ENCODE measurements at regions of chr14 and their contacts with region 1.

Region 1: GRCh38 chr14:75126679-75127473 is at the start of gene NEK9:
- DNase-seq: peak; percentile 92 to 96
- ATAC-seq: peak; percentile 93 to 96 (median 95)
- H3K4me3 ChIP-seq: peak within 1 kb of the TSS; percentile 83
- H3K27ac ChIP-seq: peak within 1 kb of the TSS; percentile 93
- H3K4me1 ChIP-seq: peaks cover 41% of the 10 kb centered on the region
- H3K27me3 ChIP-seq: no peaks in the 10 kb centered on the region
- CTCF ChIP-seq: no peak
- total RNA-seq, gene NEK9: 69.1 to 116 (median 88.5) TPM

Region 2: DNA sequence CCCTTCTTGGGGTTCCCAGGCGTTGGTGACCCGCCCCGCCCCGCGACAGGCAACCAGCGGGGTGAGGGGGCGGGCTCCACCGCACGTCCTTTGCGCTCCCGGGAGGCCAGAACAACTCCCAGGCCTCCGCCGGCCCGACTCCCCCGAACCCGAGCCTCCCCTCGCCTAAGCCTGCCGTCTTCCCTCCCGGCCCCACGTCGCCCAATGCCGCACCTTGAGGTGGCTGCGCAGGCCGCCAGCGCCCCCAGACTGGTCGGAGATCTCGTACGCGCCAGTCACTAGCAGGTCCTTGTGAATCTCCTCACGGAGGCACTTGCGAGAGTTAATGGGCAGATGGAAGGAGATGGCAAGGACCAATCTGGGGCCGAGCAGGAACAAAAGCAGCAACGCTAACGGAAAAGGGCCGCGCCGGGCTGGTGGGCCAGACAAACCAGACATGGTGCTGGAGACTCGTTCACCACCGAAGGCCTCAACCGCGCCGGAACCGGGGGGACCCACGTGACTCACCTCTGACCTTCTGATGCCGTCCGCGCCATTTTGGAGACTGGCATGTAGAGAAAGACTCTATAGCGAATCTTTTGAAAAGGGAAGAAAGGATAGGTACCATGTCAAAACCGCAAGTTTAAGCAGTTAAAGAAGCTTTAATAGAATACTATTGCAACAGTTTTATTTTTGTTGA is 49.4 kb after region 1 on chr14 and contains the start of gene TMED10:
- intact Hi-C with region 1: loop called in 1 of 2 experiments (anchors 5 kb)
- DNase-seq: peak; percentile 89 to 95
- ATAC-seq: peak; percentile 95
- H3K4me3 ChIP-seq: peak within 1 kb of the TSS; percentile 90
- H3K27ac ChIP-seq: peak within 1 kb of the TSS; percentile 99
- H3K4me1 ChIP-seq: peaks cover 23% of the 10 kb centered on the region
- H3K27me3 ChIP-seq: no peaks in the 10 kb centered on the region
- CTCF ChIP-seq: no peak
- total RNA-seq, gene TMED10: 128 to 203 (median 159) TPM